ENCODE measurements at regions of chr16 and their contacts with region 1.

Region 1: DNA sequence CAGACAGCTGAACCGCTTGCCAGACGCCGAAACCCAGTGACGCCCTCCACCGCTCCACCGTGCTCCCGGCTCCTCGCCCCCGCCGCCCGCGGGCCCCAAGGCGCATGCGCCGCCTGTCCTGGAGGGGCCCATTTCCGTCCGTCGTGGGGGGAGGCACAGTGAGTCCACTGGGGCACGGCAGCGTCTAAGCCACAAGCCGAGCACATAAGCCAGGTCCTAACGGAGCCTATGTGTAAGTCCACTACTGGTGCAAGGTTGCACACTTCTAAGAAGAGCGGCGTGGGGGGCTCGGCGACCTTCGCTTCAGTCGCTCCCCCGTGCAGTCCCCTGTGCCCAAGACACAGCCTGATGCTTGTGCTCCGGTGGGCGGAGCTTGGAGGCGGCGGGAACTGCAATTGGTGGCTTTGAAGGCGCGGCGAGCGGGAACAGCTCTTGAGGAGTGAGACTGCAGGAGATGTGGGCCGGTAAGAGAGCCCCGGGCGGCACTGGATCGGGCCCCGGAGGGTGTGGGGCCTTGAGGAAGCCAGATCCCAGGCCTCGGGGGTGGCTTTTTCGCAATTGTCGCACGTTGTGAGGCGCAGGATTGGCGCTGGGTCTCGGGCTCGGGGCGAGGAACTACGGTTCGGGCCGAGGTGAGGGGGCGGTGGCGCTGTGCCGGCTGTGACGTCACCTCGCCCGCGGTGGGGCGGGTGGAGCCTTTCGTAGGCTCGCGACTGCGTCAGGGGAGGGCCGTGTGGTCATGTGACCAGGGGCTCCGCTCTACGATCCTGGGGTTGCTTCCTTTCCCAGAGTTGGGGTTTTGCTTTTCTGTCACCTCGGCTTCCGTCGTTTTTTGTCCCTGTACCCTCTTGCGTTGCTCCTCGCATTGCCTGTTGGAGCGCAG is at the starts of genes CENPN and CMC2:
- DNase-seq: peak; percentile 100
- ATAC-seq: peak; percentile 96
- total RNA-seq, gene CENPN: 7.2 TPM
- total RNA-seq, gene CMC2: 132 TPM

Region 2: DNA sequence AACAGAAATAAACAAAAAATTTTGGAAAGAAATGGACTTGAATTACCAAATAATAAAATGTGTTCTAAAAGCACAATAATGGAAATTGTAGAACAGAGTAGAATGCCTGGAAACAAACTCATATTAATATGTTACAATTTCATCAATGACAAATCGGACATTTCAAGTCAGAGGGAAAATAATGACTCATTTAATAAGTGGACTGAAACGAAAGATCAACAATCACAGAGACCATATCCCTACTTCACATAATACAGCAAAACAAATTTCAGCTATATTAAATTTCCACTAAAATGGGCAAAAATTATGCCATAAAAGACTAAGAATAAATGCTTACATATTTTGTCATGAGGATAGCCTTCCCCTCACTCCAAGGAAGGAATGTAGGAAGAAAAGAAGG is 228.3 kb before region 1 on chr16:
- intact Hi-C with region 1: no loop called
- DNase-seq: no peak
- ATAC-seq: no peak

Region 3: GRCh38 chr16:80914379-80915078 is 92.5 kb before region 1 on chr16:
- intact Hi-C with region 1: no loop called
- DNase-seq: no peak
- ATAC-seq: no peak

Region 4: DNA sequence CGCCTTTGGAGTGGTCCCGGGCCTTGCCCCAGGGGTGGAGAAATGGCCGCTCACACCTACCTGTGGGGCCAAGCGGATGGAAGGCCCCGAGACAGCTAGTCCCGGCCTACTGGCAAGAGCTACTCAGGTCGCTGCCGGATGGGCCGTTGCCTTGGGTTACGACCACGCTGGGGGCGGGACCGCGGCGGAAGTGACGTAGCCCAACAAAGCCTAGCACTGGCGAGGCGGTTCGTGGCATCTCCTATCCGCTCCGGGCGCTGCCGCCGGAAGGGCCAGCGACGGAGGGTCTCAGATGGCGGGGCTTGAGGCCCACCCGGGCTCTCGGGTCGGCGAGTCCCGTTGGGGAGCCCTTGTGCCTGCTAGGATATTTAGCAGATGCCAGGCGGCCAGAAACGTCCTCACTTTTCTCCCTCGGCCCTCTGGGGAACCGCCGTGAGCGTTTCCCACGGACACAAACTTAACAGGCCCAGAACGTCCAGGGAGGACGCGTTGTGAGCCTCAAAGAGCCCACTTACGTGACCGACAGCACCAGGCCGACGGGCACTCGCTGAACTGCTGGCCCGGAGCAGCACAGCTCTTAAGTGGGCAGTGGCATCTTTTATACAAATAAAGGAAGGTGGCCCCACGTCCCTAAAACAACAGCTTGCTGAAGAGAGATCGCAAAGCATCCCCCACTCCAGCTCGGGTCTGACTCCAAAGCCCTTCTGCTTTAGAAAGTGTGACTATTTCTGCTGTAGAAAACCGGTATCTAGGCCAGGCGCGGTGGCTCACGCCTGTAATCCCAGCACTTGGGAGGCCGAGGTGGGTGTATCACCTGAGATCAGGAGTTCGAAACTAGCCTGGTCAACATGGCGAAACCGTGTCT is 70.3 kb after region 1 on chr16 and contains the start of gene C16orf46:
- intact Hi-C with region 1: loop called (anchors 5 kb)
- DNase-seq: peak; percentile 98
- ATAC-seq: peak; percentile 99
- total RNA-seq, gene C16orf46: 0.69 TPM

Measured in left ventricle myocardium superior (tissue), 1 donor.